ENCODE measurements at regions of chr12 and their contacts with region 1.

Region 1: GRCh38 chr12:121964813-121965643 is 46.6 kb downstream of the CFAP251 start:
- DNase-seq: no peak
- ATAC-seq: no peak
- H3K4me3 ChIP-seq: no peak overlapping the region
- H3K27ac ChIP-seq: no peak overlapping the region
- H3K4me1 ChIP-seq: no peaks in the 10 kb centered on the region
- H3K27me3 ChIP-seq: no peaks in the 10 kb centered on the region
- CTCF ChIP-seq: no peak

Region 2: DNA sequence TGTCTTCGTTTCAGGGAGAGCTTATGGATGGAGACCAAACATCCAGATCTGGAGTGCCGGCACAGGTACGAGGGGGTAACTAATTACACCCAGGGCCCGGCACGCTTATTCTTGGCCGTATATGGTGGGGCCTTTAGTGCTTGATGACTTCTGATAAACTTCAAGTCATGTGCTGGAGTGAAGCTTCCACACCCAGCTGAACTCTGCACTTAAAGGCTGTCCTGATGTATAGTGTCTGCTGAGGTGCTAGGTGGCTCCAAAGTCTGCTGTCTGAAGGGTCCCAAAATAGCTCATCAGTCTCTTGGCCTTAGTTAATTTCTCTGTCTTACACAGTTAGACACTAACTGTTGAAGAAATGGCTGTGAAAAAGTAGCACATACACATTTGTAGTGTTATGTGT is 547.2 kb before region 1 on chr12:
- CTCF ChIA-PET with region 1: no interaction called
- POLR2A ChIA-PET with region 1: no interaction called
- in situ Hi-C with region 1: no loop called
- intact Hi-C with region 1: no loop called
- DNase-seq: no peak
- ATAC-seq: no peak
- H3K4me3 ChIP-seq: no peak overlapping the region
- H3K27ac ChIP-seq: no peak overlapping the region
- H3K4me1 ChIP-seq: no peaks in the 10 kb centered on the region
- H3K27me3 ChIP-seq: no peaks in the 10 kb centered on the region
- CTCF ChIP-seq: no peak

Region 3: DNA sequence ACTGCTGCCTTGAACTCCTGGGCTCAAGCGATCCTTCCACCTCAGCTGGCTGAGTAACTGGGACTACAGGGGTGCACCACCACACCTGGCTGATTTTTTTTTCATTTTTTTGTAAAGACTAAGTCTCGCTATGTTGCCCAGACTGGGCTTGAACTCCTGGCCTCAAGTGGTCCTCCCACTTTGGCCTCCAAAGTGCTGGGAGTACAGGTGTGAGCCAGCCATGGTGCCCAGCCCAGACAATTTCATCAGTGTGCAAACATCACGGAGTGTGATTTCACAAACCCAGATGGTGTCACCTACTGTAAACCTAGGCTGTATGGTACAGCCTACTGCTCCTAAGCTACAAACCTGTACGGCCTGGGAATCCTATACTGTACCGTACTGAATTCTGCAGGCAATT is 49.8 kb after region 1 on chr12:
- CTCF ChIA-PET with region 1: no interaction called
- POLR2A ChIA-PET with region 1: no interaction called
- in situ Hi-C with region 1: loop called (anchors 5 kb)
- intact Hi-C with region 1: no loop called
- DNase-seq: no peak
- ATAC-seq: no peak; the same call in 1 of the 2 replicates
- H3K4me3 ChIP-seq: no peak overlapping the region
- H3K27ac ChIP-seq: no peak overlapping the region
- H3K4me1 ChIP-seq: no peaks in the 10 kb centered on the region
- H3K27me3 ChIP-seq: no peaks in the 10 kb centered on the region
- CTCF ChIP-seq: no peak